Dorsolateral prefrontal cortex (tissue), 120 donors: ENCODE measurements at regions of chr9 and their contacts with region 1.

Region 1: DNA sequence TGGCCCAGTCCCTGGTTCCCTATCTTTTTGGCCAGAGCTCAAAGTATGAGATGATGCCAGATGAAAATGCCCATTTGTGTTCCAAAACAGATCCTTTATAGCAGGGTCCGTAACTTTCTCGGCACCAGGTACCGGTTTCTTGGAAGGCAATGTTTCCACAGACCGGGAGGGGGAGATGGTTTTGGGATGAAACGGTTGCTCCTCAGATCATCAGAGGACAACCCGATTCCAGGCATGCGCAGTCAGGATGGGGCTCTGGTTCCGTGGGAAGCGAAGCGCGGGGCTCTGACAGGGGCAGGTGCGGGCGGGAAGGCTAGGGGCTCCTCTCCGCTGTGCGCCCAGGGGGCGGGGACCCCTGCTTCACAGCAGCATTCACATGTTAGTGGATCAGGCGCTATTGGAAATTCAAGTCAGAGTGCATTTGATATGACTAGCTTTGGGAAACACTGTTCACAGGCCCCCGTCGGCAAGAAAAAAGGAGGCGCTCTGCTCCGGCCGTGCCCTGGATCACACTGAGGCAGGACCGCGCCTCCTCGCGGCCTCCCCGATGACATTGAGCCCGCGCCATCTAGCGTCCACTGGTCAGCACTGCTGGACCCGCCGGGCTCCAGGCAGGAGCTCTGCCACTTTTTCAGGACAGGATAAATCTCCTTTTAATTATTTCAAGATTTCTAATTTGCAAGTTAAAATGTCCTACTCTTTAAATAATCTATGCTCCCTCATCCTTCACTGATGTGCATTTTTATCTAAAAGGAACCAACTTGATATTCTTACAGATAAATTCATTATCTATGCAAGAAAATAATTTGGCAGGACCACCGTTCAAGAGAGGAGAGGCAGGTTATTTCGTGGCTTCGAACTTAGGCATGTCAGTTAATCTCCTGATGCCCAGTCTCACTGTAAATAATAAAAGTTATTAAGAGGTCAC is 190.0 kb downstream of the FANCC start:
- DNase-seq: peak; percentile 88 to 93 (median 90)
- H3K4me3 ChIP-seq: peak overlapping the region; percentile 27 to 75 (median 58)
- H3K27ac ChIP-seq: peak overlapping the region in 52 of 59 donors; percentile 9 to 92 (median 77)
- H3K27me3 ChIP-seq: no peaks in the 10 kb centered on the region
- CTCF ChIP-seq: peak; percentile 76 to 100 (median 99)

Region 2: DNA sequence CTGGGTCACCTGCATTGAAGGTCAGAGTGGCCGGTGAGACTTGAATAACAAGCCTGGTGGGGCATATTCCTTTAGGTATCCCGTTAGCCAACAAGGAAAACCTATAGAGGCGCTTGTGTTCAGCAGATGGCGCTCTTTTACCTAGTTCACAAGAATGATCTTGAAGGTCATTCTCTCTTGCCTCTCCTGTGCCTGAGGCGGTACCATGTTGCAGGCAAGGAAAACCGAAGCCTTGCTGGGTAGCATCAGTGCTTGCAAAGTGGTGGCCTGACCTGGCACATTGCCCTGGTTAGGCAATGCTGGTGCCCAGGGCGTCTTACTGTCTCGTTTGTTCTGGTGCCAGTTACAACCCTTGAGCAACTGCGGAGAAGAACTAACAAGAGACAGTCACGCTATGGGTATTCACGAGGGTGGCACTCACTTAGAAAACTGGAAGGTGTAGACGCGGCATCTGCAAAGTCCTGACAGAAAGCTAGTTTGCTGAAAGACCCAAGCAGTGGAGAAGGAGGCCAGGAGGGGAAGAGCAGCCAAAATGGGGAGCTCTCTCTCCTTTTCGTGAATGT is 344.3 kb before region 1 on chr9:
- intact Hi-C with region 1: loop called (anchors 2 to 5 kb)
- DNase-seq: peak; percentile 32 to 87 (median 67)
- H3K4me3 ChIP-seq: peak overlapping the region in 11 of 59 donors; percentile 10 to 28 (median 19)
- H3K27ac ChIP-seq: peak overlapping the region in 57 of 59 donors; percentile 2 to 91 (median 81)
- H3K27me3 ChIP-seq: no peaks in the 10 kb centered on the region
- CTCF ChIP-seq: peak in 55 of 56 donors; percentile 27 to 86 (median 70)

Region 3: GRCh38 chr9:94967482-94967881 is 160.0 kb before region 1 on chr9:
- intact Hi-C with region 1: loop called (anchors 5 to 10 kb)
- DNase-seq: no peak
- H3K4me3 ChIP-seq: no peak overlapping the region
- H3K27ac ChIP-seq: peak overlapping the region in 12 of 59 donors; percentile 4 to 87 (median 79)
- H3K27me3 ChIP-seq: no peaks in the 10 kb centered on the region
- CTCF ChIP-seq: no peak

Region 4: DNA sequence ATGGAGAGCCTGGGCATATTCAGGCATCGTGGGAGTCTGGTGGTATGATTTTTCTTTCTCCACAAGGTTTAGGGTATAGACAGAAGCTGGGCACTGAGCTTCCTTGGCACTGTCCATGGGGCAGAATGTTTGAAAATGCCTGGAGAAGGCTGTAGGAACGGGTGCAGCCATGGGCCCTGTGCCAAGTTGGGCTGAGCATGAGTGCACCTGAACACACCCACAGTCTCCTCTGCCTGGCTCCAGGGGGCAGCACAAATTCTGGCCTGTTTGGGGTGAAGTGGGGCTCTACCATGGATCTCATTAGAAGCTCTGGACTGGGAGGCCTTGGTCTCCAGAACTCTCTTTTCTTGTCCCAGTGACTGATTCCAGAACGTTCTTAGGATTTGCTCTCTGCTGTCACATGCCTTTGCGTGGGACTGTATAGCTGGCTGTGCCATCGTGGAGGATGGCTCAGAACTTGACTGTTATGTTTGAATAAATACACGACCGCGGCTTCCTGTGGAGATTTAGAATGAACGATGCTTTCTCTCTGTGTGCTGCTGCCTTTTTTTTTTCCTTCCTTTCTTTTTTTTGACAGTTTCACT is 39.8 kb before region 1 on chr9:
- intact Hi-C with region 1: loop called (anchors 2 to 5 kb)
- DNase-seq: peak in 4 of 10 donors; percentile 25 to 41 (median 34)
- H3K4me3 ChIP-seq: no peak overlapping the region
- H3K27ac ChIP-seq: peak overlapping the region in 55 of 59 donors; percentile 6 to 100 (median 96)
- H3K27me3 ChIP-seq: no peaks in the 10 kb centered on the region
- CTCF ChIP-seq: peak in 2 of 56 donors; percentile 5 to 16

Region 5: GRCh38 chr9:95197692-95198271 is 70.3 kb after region 1 on chr9:
- intact Hi-C with region 1: no loop called
- DNase-seq: no peak
- H3K4me3 ChIP-seq: no peak overlapping the region
- H3K27ac ChIP-seq: no peak overlapping the region
- H3K27me3 ChIP-seq: no peaks in the 10 kb centered on the region
- CTCF ChIP-seq: no peak

Region 6: DNA sequence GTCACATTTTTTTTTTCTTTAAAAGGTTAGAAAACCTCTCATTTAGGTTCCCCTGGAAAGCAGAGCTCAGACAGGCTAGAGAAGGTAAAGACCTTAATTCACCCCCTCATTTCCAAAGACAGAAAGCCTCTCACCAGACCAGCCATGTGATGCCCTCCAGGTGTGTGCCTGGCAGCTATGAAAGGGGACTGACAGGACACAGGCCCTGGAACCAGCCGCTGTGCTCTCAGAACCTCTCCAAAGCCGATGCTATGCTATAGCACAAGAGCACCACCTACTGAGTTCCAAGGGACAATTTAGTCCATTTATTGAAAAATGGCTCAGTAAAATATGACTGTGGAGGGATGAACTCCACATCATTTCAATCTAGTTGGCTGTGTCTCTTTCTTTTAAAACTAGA is 141.2 kb after region 1 on chr9:
- intact Hi-C with region 1: loop called in 1 of 2 experiments (anchors 5 kb)
- DNase-seq: peak in 1 of 10 donors; percentile 17
- H3K4me3 ChIP-seq: no peak overlapping the region
- H3K27ac ChIP-seq: no peak overlapping the region
- H3K27me3 ChIP-seq: no peaks in the 10 kb centered on the region
- CTCF ChIP-seq: peak in 52 of 56 donors; percentile 14 to 66 (median 44)

Region 7: GRCh38 chr9:95327239-95327865 is 199.8 kb after region 1 on chr9:
- intact Hi-C with region 1: no loop called
- DNase-seq: no peak
- H3K4me3 ChIP-seq: no peak overlapping the region
- H3K27ac ChIP-seq: no peak overlapping the region
- H3K27me3 ChIP-seq: no peaks in the 10 kb centered on the region
- CTCF ChIP-seq: no peak